Adrenal gland (tissue), 19 donors: ENCODE measurements at regions of chr20 and their contacts with region 1.

Region 1: GRCh38 chr20:54649511-54649962 is 174.1 kb downstream of the DOK5 start:
- DNase-seq: peak; percentile 75 to 95 (median 84)
- H3K4me3 ChIP-seq: no peak overlapping the region
- H3K27ac ChIP-seq: no peak overlapping the region
- H3K4me1 ChIP-seq: peaks cover 0 to 4% of the 10 kb centered on the region in 2 donors
- H3K27me3 ChIP-seq: no peaks in the 10 kb centered on the region
- CTCF ChIP-seq: peak; percentile 57 to 85 (median 68)
- POLR2A ChIP-seq: no peak

Region 2: GRCh38 chr20:54097236-54097529 is 552.4 kb before region 1 on chr20:
- intact Hi-C with region 1: loop called (anchors 5 to 10 kb)
- DNase-seq: no peak
- H3K4me3 ChIP-seq: no peak overlapping the region
- H3K27ac ChIP-seq: no peak overlapping the region
- H3K4me1 ChIP-seq: no peaks in the 10 kb centered on the region
- H3K27me3 ChIP-seq: peaks cover 6% of the 10 kb centered on the region
- CTCF ChIP-seq: no peak
- POLR2A ChIP-seq: no peak

Region 3: DNA sequence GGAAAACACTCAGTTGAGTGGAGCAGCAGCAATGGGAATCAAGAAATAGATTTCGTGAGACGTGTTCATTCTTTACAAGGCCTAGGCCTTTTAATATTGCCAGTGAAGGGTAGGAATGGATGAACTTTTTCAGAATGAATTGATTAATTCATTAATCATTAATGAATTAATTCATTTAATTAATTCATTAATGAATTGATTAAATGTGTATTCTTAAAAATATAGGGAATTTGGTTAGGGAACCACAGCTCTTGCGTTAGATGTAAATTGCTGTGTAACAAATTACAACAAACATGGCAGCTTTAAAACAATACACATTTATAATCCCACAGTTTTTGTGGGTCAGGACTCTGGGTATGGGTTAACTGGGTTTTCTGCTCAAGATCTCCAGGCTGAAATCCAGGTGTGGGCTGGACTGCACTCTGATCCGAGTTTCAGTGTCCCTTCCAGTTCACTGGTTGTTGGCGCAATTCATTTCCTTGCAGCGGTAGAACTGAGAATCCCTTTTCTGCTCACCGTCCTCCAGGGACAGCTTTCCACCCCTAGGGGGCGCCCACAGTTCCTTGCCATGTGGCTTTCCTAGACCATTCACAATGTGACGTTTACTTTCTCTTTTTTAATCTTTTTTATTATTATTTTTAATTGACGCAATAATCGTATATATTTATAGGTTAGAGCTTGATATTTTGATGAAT is 546.3 kb before region 1 on chr20:
- intact Hi-C with region 1: loop called (anchors 5 to 10 kb)
- DNase-seq: peak; percentile 75 to 87 (median 83)
- H3K4me3 ChIP-seq: no peak overlapping the region
- H3K27ac ChIP-seq: no peak overlapping the region
- H3K4me1 ChIP-seq: no peaks in the 10 kb centered on the region
- H3K27me3 ChIP-seq: no peaks in the 10 kb centered on the region
- CTCF ChIP-seq: peak; percentile 45 to 91 (median 74)
- POLR2A ChIP-seq: no peak

Region 4: GRCh38 chr20:54199721-54200176 is 449.8 kb before region 1 on chr20:
- intact Hi-C with region 1: loop called in 1 of 2 experiments (anchors 5 kb)
- DNase-seq: peak; percentile 58 to 91 (median 78)
- H3K4me3 ChIP-seq: no peak overlapping the region
- H3K27ac ChIP-seq: no peak overlapping the region
- H3K4me1 ChIP-seq: peaks cover 0 to 4% of the 10 kb centered on the region in 2 donors
- H3K27me3 ChIP-seq: no peaks in the 10 kb centered on the region
- CTCF ChIP-seq: peak; percentile 74 to 95 (median 84)
- POLR2A ChIP-seq: no peak

Region 5: GRCh38 chr20:54856006-54856601 is 206.6 kb after region 1 on chr20:
- intact Hi-C with region 1: no loop called
- DNase-seq: no peak
- H3K4me3 ChIP-seq: no peak overlapping the region
- H3K27ac ChIP-seq: no peak overlapping the region
- H3K4me1 ChIP-seq: no peaks in the 10 kb centered on the region
- H3K27me3 ChIP-seq: no peaks in the 10 kb centered on the region
- CTCF ChIP-seq: no peak
- POLR2A ChIP-seq: no peak